ENCODE measurements at regions of chr6 and their contacts with region 1.

Region 1: GRCh38 chr6:137728385-137729349 is 138.4 kb upstream of the TNFAIP3 start:
- H3K4me3 Mint-ChIP-seq: no peak overlapping the region
- H3K27ac Mint-ChIP-seq: no peak overlapping the region
- H3K4me1 Mint-ChIP-seq: peaks cover 46% of the 10 kb centered on the region
- H3K27me3 Mint-ChIP-seq: peaks cover 49% of the 10 kb centered on the region

Region 2: DNA sequence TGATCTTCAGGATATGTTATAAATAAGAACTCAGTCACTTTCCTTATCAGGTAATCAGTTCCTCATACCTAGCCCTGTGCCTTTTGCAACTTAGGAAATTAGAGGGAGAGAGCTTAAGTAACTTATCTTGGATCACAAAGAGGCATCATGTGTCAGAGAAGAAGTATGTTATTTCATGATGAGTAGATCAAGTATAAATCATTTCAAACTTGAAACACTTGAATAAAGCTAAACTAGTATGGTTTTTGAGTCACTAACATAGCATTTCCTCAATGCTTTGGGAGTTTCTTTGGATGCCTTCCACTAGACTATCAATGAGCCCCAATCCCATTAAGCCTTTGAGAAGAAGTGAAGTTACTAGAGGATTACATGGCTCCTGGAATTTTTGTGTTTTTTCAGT is 35.8 kb after region 1 on chr6:
- intact Hi-C with region 1: loop called (anchors 5 kb)
- H3K4me3 Mint-ChIP-seq: no peak overlapping the region
- H3K27ac Mint-ChIP-seq: no peak overlapping the region
- H3K4me1 Mint-ChIP-seq: peaks cover 45% of the 10 kb centered on the region
- H3K27me3 Mint-ChIP-seq: peaks cover 25% of the 10 kb centered on the region

Region 3: GRCh38 chr6:137903933-137904821 is 175.5 kb after region 1 on chr6:
- intact Hi-C with region 1: no loop called
- H3K4me3 Mint-ChIP-seq: no peak overlapping the region
- H3K27ac Mint-ChIP-seq: peak overlapping the region; percentile 63
- H3K4me1 Mint-ChIP-seq: peaks cover 25% of the 10 kb centered on the region
- H3K27me3 Mint-ChIP-seq: no peaks in the 10 kb centered on the region

Region 4: DNA sequence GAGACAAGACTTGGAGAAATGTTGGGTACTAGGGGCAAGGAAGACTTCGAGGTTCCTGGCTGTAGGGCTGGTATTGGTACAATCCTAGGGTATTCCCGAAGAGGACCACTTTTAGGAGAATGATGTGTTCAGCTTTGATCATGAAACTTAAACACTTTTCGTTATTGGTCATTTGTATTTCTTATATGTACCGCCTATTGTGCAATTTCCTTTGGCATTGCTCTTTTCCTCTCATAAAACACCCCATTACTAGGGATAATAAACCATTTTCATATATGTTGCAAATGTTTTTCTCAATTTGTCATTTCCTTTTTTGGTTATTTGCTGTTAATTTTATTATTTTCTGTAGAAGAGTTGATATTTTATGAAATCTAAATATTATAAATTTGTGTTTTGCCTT is 414.1 kb after region 1 on chr6:
- intact Hi-C with region 1: no loop called
- H3K4me3 Mint-ChIP-seq: no peak overlapping the region
- H3K27ac Mint-ChIP-seq: no peak overlapping the region
- H3K4me1 Mint-ChIP-seq: no peaks in the 10 kb centered on the region
- H3K27me3 Mint-ChIP-seq: peaks cover 16% of the 10 kb centered on the region

Measured in dendritic cell treated with granulocyte-macrophage colony-stimulating factor and Interleukin-4, amounts not matched to agents 40 ng/mL and 50 ng/mL, for 4 days (primary cell).